ENCODE measurements at regions of chr3 and their contacts with region 1.

Region 1: GRCh38 chr3:38843898-38844297 is 27.9 kb upstream of the SCN10A start:
- DNase-seq: no peak
- H3K4me3 ChIP-seq: no peak overlapping the region
- H3K27ac ChIP-seq: no peak overlapping the region
- H3K4me1 ChIP-seq: no peaks in the 10 kb centered on the region
- H3K27me3 ChIP-seq: peaks cover 11% of the 10 kb centered on the region
- CTCF ChIP-seq: peak; percentile 67

Region 2: GRCh38 chr3:38521391-38521987 is 322.4 kb before region 1 on chr3:
- intact Hi-C with region 1: loop called (anchors 10 kb)
- DNase-seq: no peak
- H3K4me3 ChIP-seq: no peak overlapping the region
- H3K27ac ChIP-seq: peak overlapping the region; percentile 78
- H3K4me1 ChIP-seq: peaks cover 44% of the 10 kb centered on the region
- H3K27me3 ChIP-seq: no peaks in the 10 kb centered on the region
- CTCF ChIP-seq: peak; percentile 95

Region 3: DNA sequence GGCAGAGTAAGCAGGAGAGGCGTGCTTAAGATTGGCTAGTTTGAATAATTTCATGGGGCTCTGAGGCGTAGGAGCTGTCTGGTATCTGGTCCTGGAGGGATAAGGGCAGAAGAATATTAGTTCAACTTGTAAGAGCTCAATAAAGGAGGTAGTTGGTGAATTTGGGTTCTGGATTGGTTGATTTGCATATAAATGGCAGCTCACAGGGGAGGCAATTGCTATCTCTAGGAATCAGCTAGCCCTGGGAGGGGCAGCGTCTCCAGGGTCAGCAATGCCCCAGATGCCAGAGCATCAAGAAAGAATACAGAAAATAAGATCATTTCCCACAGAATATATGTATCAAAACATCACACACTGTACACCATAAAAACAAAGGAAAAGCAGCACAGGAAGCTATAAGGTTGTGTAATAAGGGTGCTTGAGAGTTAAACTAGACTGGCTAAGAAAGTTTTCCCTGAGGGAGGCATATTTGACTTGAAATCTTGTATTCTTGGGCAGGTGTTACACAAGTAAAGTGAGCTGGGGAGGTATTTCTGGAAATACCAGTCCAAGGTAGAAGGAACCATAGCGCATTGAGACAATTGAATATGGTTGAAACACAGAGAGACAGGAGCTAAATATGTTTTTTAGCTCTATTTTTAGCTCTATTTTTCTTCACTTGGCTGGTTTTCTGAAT is 629.7 kb after region 1 on chr3:
- intact Hi-C with region 1: no loop called
- DNase-seq: no peak
- H3K4me3 ChIP-seq: no peak overlapping the region
- H3K27ac ChIP-seq: no peak overlapping the region
- H3K4me1 ChIP-seq: no peaks in the 10 kb centered on the region
- H3K27me3 ChIP-seq: peaks cover 43% of the 10 kb centered on the region
- CTCF ChIP-seq: no peak